CD8-positive, alpha-beta T cell (primary cell): ENCODE measurements at regions of chr6 and their contacts with region 1.

Region 1: GRCh38 chr6:135909737-135910387 is 58.4 kb downstream of the PDE7B start:
- DNase-seq: peak; percentile 12 to 84 (median 59)
- ATAC-seq: peak; percentile 92
- H3K4me3 ChIP-seq: no peak overlapping the region
- H3K4me3 Mint-ChIP-seq: no peak overlapping the region
- H3K27ac ChIP-seq: no peak overlapping the region
- H3K27ac Mint-ChIP-seq: no peak overlapping the region
- H3K4me1 ChIP-seq: no peaks in the 10 kb centered on the region
- H3K4me1 Mint-ChIP-seq: peaks cover 4% of the 10 kb centered on the region
- H3K27me3 ChIP-seq: no peaks in the 10 kb centered on the region
- H3K27me3 Mint-ChIP-seq: no peaks in the 10 kb centered on the region
- CTCF ChIP-seq: peak; percentile 68

Region 2: DNA sequence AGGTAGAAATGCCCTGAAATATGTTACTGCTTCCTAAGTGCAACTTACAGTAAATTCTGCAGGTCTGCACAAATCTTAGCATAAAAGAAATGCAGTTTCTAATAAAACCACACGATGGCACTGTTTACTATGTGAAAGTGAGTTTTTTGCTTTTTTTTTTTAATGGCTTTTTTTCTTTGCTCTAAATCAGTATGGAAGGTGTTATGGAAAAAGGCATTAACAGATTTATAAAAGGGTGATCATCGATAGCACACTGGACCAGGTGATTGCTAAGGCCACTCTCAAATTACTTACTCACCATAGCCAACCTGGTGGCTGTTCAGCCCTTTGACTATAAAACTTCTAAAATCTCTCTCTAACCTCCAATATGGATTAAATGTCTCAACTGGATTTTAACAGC is 458.2 kb before region 1 on chr6:
- CTCF ChIA-PET with region 1: interaction called, 9 read pairs
- POLR2A ChIA-PET with region 1: no interaction called
- intact Hi-C with region 1: loop called (anchors 1 to 2 kb)
- DNase-seq: peak in 2 of 9 experiments; percentile 55 to 63
- ATAC-seq: peak; percentile 52
- H3K4me3 ChIP-seq: no peak overlapping the region
- H3K4me3 Mint-ChIP-seq: no peak overlapping the region
- H3K27ac ChIP-seq: no peak overlapping the region
- H3K27ac Mint-ChIP-seq: no peak overlapping the region
- H3K4me1 ChIP-seq: no peaks in the 10 kb centered on the region
- H3K4me1 Mint-ChIP-seq: no peaks in the 10 kb centered on the region
- H3K27me3 ChIP-seq: no peaks in the 10 kb centered on the region
- H3K27me3 Mint-ChIP-seq: no peaks in the 10 kb centered on the region
- CTCF ChIP-seq: peak; percentile 94

Region 3: DNA sequence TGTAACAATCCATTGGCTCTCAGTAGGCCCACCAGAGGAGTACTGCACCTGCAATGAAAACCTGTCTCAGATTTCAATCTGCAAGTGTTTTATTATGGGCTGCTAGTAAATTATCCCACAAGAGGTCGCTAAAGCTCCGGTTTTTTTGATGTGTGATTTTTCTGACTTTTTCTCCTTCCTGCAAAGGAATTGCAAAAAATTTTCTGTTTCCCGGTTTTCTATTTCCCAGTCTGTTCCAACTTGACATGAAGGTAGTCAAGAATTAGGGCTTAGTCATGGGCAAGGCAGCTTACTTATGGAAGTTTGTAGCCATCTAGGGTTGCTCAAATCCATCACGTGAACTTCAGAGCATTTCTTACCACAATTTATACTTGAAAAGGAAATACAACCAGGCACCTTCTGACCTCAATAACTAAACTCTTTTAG is 373.9 kb before region 1 on chr6:
- CTCF ChIA-PET with region 1: interaction called, 31 read pairs
- POLR2A ChIA-PET with region 1: no interaction called
- intact Hi-C with region 1: loop called (anchors 1 kb)
- DNase-seq: peak in 2 of 9 experiments; percentile 52 to 62
- ATAC-seq: peak; percentile 46
- H3K4me3 ChIP-seq: no peak overlapping the region
- H3K4me3 Mint-ChIP-seq: peak overlapping the region; percentile 67
- H3K27ac ChIP-seq: no peak overlapping the region
- H3K27ac Mint-ChIP-seq: no peak overlapping the region
- H3K4me1 ChIP-seq: no peaks in the 10 kb centered on the region
- H3K4me1 Mint-ChIP-seq: peaks cover 10% of the 10 kb centered on the region
- H3K27me3 ChIP-seq: no peaks in the 10 kb centered on the region
- H3K27me3 Mint-ChIP-seq: peaks cover 2% of the 10 kb centered on the region
- CTCF ChIP-seq: peak; percentile 76

Region 4: GRCh38 chr6:135680964-135681913 is 228.6 kb before region 1 on chr6:
- CTCF ChIA-PET with region 1: interaction called, 114 read pairs
- POLR2A ChIA-PET with region 1: interaction called, 6 read pairs
- intact Hi-C with region 1: loop called (anchors 1 kb)
- DNase-seq: no peak
- ATAC-seq: no peak
- H3K4me3 ChIP-seq: no peak overlapping the region
- H3K4me3 Mint-ChIP-seq: no peak overlapping the region
- H3K27ac ChIP-seq: no peak overlapping the region
- H3K27ac Mint-ChIP-seq: no peak overlapping the region
- H3K4me1 ChIP-seq: no peaks in the 10 kb centered on the region
- H3K4me1 Mint-ChIP-seq: no peaks in the 10 kb centered on the region
- H3K27me3 ChIP-seq: no peaks in the 10 kb centered on the region
- H3K27me3 Mint-ChIP-seq: no peaks in the 10 kb centered on the region
- CTCF ChIP-seq: no peak

Region 5: DNA sequence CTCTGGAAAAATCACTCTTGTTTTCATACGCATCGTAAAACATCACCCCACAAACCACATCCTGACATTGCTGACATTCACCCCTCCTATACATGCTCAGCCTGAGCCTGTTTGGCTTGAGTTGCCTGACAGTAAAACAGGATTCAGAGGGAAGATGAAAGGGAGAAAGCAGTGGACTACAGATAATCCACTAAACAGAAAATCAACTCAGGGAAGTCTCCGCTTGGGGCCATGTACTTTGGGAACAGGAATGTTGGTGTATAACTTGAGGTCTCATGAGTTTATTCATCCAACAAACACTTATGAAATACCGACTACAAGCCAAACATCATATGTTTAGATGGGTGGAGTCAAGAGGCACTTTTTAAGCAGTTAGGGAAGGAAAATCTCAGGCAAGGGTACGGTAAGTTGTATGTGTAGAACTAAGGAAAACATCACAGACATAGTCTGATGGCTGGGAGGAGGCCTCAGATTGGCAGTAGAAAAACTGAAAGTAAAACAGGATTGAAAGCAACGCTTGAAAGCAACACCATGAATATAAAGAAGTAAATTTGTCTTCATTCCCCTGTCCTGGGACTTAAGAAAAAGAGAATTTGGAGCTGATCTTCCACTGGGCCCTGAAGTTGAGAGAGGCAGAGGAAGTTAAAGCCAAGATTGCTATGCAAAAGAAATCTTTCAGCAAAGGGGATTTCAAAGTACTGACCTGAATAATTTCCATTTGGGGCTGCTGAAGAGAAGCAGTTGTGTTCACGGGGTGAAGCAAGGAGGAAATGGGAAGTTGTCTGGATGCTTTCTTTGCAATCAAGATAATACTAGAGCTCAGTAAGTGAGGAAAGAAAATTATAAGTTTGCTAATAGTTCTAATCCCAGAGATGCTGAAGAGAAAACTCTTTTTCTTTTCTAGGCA is 29.5 kb before region 1 on chr6:
- CTCF ChIA-PET with region 1: interaction called, 4 read pairs
- POLR2A ChIA-PET with region 1: interaction called, 4 read pairs
- intact Hi-C with region 1: loop called in 1 of 2 experiments (anchors 1 kb)
- DNase-seq: peak; percentile 24 to 87 (median 64)
- ATAC-seq: peak; percentile 84
- H3K4me3 ChIP-seq: peak overlapping the region; percentile 49 to 53
- H3K4me3 Mint-ChIP-seq: peak overlapping the region; percentile 79
- H3K27ac ChIP-seq: peak overlapping the region; percentile 84 to 96
- H3K27ac Mint-ChIP-seq: peak overlapping the region; percentile 95
- H3K4me1 ChIP-seq: peaks cover 41% of the 10 kb centered on the region
- H3K4me1 Mint-ChIP-seq: peaks cover 56% of the 10 kb centered on the region
- H3K27me3 ChIP-seq: no peaks in the 10 kb centered on the region
- H3K27me3 Mint-ChIP-seq: no peaks in the 10 kb centered on the region
- CTCF ChIP-seq: no peak

Region 6: GRCh38 chr6:135922174-135922573 is 12.3 kb after region 1 on chr6:
- CTCF ChIA-PET with region 1: interaction called, 19 read pairs
- POLR2A ChIA-PET with region 1: no interaction called
- intact Hi-C with region 1: no loop called
- DNase-seq: no peak
- ATAC-seq: no peak
- H3K4me3 ChIP-seq: no peak overlapping the region
- H3K4me3 Mint-ChIP-seq: no peak overlapping the region
- H3K27ac ChIP-seq: no peak overlapping the region
- H3K27ac Mint-ChIP-seq: no peak overlapping the region
- H3K4me1 ChIP-seq: no peaks in the 10 kb centered on the region
- H3K4me1 Mint-ChIP-seq: no peaks in the 10 kb centered on the region
- H3K27me3 ChIP-seq: no peaks in the 10 kb centered on the region
- H3K27me3 Mint-ChIP-seq: peaks cover 3% of the 10 kb centered on the region
- CTCF ChIP-seq: no peak

Region 7: GRCh38 chr6:135955099-135955498 is 45.2 kb after region 1 on chr6:
- CTCF ChIA-PET with region 1: no interaction called
- POLR2A ChIA-PET with region 1: no interaction called
- intact Hi-C with region 1: no loop called
- DNase-seq: no peak
- ATAC-seq: no peak
- H3K4me3 ChIP-seq: no peak overlapping the region
- H3K4me3 Mint-ChIP-seq: no peak overlapping the region
- H3K27ac ChIP-seq: no peak overlapping the region
- H3K27ac Mint-ChIP-seq: no peak overlapping the region
- H3K4me1 ChIP-seq: no peaks in the 10 kb centered on the region
- H3K4me1 Mint-ChIP-seq: no peaks in the 10 kb centered on the region
- H3K27me3 ChIP-seq: no peaks in the 10 kb centered on the region
- H3K27me3 Mint-ChIP-seq: no peaks in the 10 kb centered on the region
- CTCF ChIP-seq: no peak